Mammary epithelial cell (primary cell): ENCODE measurements at regions of chr12 and their contacts with region 1.

Region 1: GRCh38 chr12:132766380-132767085 is 4.9 kb upstream of the ANKLE2 start:
- DNase-seq: no peak
- H3K4me3 ChIP-seq: no peak overlapping the region
- H3K27ac ChIP-seq: no peak overlapping the region
- H3K4me1 ChIP-seq: peaks cover 3% of the 10 kb centered on the region
- H3K27me3 ChIP-seq: no peaks in the 10 kb centered on the region
- CTCF ChIP-seq: no peak

Region 2: DNA sequence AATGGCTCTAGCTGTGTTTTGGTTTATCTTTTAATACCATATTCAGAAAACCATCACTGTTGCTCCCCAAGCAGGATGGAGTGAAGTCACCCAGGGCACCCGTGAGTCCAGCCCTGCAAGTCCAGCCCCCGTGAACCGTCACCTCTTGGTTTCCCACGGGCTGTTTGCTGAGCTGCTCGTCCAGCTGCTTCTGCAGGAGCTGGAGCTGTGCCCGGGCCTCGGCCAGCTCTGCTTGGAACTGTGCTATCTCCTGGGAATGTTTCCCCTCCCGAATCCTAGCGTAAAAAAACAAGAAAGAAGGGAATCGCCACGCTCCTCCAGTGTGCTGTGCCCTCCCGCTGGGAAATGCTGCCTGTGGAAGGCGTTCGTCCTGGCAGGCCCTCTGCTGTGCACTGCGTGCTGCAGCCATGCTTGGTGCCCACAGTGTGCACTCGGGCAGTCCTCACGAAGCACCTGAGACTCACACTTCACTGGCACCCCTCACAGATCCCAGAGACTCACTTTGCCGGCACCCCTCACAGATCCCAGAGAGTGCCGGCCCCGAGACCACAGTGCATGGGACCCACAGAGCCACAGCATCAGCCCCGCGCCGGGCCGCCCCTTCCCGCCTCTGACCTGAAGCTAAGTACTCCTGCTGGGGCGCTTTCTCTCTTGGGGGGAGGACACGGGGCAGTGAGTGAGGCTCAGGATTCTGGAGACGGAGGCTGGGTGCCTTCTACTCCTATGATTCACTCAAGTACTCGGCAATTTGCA is 10.5 kb after region 1 on chr12:
- CTCF ChIA-PET with region 1: no interaction called
- dilution Hi-C with region 1: no loop called
- in situ Hi-C with region 1: no loop called
- intact Hi-C with region 1: no loop called
- DNase-seq: no peak
- H3K4me3 ChIP-seq: no peak overlapping the region
- H3K27ac ChIP-seq: no peak overlapping the region
- H3K4me1 ChIP-seq: no peaks in the 10 kb centered on the region
- H3K27me3 ChIP-seq: no peaks in the 10 kb centered on the region
- CTCF ChIP-seq: no peak

Region 3: DNA sequence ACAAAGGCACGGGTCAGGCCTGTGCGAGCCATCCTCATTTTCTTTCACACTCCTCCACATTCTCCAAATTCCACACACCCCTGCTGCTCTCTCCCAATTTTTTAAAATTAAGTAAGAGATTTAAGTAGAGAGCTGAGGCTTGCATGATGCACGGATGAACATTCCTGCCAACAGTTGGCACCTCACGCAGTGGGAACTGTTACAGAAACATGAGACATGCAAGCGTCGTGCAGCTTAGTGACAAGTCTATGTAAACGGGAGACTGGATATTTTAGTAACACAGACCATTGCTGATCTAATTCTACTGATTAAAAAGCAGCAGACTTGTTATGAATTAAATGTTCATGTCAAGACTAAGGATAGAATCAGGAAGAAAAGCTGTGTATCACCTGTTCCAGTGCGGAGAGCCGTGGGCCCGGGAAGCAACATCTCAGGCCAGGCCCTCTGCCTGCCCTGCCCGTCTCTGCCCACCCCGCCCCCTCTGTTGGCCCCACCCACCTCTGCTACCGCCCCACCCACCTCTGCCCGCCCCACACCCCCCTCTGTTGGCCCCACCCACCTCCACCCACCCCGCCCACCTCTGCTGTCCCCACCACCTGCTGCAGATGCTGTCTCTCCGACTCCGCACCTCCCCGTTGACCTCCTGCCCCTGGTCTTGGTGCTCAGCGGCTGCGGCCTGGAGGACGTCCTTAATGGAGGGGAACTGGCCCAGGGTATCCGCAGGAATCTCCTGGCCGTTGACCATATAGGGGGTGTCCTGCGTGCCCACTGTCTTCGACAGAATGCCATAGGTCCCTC is 41.0 kb after region 1 on chr12:
- CTCF ChIA-PET with region 1: interaction called, 3 read pairs
- dilution Hi-C with region 1: no loop called
- in situ Hi-C with region 1: no loop called
- intact Hi-C with region 1: loop called (anchors 5 kb)
- DNase-seq: no peak
- H3K4me3 ChIP-seq: no peak overlapping the region
- H3K27ac ChIP-seq: no peak overlapping the region
- H3K4me1 ChIP-seq: peaks cover 12% of the 10 kb centered on the region
- H3K27me3 ChIP-seq: no peaks in the 10 kb centered on the region
- CTCF ChIP-seq: no peak

Region 4: GRCh38 chr12:132818562-132818961 is 52.0 kb after region 1 on chr12:
- CTCF ChIA-PET with region 1: no interaction called
- dilution Hi-C with region 1: loop called (anchors 5 kb)
- in situ Hi-C with region 1: no loop called
- intact Hi-C with region 1: no loop called
- DNase-seq: no peak
- H3K4me3 ChIP-seq: no peak overlapping the region
- H3K27ac ChIP-seq: no peak overlapping the region
- H3K4me1 ChIP-seq: no peaks in the 10 kb centered on the region
- H3K27me3 ChIP-seq: no peaks in the 10 kb centered on the region
- CTCF ChIP-seq: no peak